A549 (cell line): ENCODE measurements at regions of chr20 and their contacts with region 1.

Region 1: DNA sequence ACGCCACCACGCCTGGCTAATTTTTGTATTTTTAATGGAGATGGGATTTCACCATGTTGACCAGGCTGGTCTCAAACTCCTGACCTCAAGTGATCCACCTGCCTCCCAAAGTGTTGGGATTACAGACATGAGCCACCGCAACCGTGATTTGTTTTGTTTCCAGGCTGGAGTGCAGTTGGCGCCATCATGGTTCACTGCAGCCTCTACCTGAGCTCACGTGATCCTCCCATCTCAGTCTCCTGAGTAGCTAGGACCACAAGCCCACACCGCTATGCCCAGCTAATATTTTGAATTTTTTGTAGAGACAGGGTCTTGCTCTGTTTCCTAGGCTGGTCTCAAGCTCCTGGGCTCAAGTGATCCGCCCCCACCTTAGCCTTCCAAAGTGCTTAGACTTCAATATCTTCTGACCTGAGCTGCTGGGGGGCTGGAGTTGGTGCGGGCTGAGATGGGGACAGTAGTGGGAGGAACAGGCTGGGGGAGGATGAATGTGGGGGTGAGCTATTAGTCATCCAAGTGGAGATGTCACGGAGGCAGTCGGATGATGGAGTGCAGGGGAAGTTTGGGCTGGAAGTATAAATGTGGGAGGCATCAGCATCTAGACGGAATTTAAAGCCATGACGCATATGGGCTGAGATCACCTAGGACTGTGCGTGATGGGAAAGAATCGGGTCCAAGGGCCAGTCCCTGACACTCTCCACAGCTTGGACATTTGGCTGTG is 23.1 kb upstream of the ZMYND8 start:
- DNase-seq: peak; percentile 56 to 92
- ATAC-seq: peak; percentile 72 to 74
- H3K4me3 ChIP-seq: no peak overlapping the region
- H3K27ac ChIP-seq: peak overlapping the region; percentile 90 to 92
- H3K4me1 ChIP-seq: peaks cover 60% of the 10 kb centered on the region
- CTCF ChIP-seq: no peak
- EP300 ChIP-seq: peak; percentile 89 to 93
- POLR2A ChIP-seq: no peak
- RAD21 ChIP-seq: peak in 1 of 2 experiments; percentile 7; a peak in 3 of 5 replicates

Region 2: DNA sequence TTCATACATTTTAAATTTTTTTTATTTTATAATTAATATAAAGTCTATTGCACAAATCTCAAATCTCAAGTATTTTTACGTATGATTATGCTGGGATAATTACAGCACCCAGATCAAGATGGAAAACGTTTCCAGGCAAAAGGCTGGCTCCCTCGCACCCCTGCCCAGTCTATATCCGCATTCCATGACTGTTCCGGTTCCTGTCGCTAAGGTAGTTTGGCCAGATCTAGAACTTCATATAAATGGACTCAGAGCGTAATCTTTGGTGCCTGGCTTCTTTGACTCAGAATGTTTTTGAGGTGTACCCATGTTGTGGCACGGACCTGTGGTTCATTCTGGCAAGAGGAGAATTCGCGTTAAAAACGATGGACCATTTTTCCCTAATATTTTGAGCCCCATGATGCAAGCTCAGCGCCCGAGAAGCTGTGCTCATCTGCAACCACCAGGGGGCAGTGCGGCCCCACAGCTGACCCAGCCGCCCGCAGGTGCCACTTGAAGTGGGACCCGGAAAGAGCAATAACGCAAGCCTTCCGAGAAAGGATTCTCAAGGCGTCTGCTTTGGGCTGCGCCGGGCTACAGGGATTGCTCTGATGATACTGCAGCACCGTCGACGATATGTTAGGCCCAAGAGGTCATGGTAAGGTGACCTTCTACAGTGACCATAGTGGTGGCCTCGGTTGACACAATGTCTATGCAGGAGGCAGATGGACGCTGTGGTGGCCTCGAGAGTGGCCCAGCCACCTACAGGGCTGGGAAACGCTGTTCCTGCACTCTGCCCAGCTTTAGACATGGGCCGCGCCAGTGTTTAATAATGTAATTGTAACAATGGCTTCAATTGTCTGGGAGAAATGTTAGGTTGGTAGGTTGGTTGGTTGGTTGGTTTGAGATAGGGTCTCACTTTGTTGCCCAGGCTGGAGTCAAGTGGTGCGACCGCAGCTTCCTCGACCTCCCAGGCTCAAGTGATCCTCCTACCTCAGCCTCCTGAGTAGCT is 183.2 kb before region 1 on chr20:
- CTCF ChIA-PET with region 1: interaction called, 267 read pairs
- POLR2A ChIA-PET with region 1: interaction called, 7 read pairs
- DNase-seq: peak; percentile 69 to 86
- ATAC-seq: peak; percentile 71 to 73
- H3K4me3 ChIP-seq: no peak overlapping the region
- H3K27ac ChIP-seq: peak overlapping the region; percentile 75 to 87
- H3K4me1 ChIP-seq: peaks cover 22% of the 10 kb centered on the region
- CTCF ChIP-seq: peak; percentile 98
- EP300 ChIP-seq: no peak
- POLR2A ChIP-seq: no peak
- RAD21 ChIP-seq: peak; percentile 96 to 98

Region 3: GRCh38 chr20:47258745-47259695 is 120.6 kb before region 1 on chr20:
- CTCF ChIA-PET with region 1: interaction called, 51 read pairs
- POLR2A ChIA-PET with region 1: no interaction called
- DNase-seq: peak in 1 of 2 experiments; percentile 23
- ATAC-seq: no peak
- H3K4me3 ChIP-seq: no peak overlapping the region
- H3K27ac ChIP-seq: no peak overlapping the region
- H3K4me1 ChIP-seq: 0 out of 3 replicates have a peak, but pooled peaks cover 4% of the 10 kb centered on the region
- CTCF ChIP-seq: no peak
- EP300 ChIP-seq: no peak
- POLR2A ChIP-seq: no peak
- RAD21 ChIP-seq: no peak

Region 4: GRCh38 chr20:47304287-47304686 is 75.3 kb before region 1 on chr20:
- CTCF ChIA-PET with region 1: interaction called, 53 read pairs
- POLR2A ChIA-PET with region 1: no interaction called
- DNase-seq: peak in 1 of 2 experiments; percentile 55
- ATAC-seq: peak; percentile 79 to 83
- H3K4me3 ChIP-seq: no peak overlapping the region
- H3K27ac ChIP-seq: peak overlapping the region; percentile 92 to 94
- H3K4me1 ChIP-seq: peaks cover 35% of the 10 kb centered on the region
- CTCF ChIP-seq: no peak
- EP300 ChIP-seq: no peak
- POLR2A ChIP-seq: no peak
- RAD21 ChIP-seq: peak; percentile 21 to 29; a peak in 3 of 5 replicates

Region 5: GRCh38 chr20:47356526-47357295 is 22.9 kb before region 1 on chr20 and contains the start of gene ZMYND8:
- CTCF ChIA-PET with region 1: interaction called, 102 read pairs
- POLR2A ChIA-PET with region 1: interaction called, 22 read pairs
- DNase-seq: peak; percentile 90 to 94
- ATAC-seq: peak; percentile 8 to 45; a peak in 3 of 6 replicates
- H3K4me3 ChIP-seq: peak within 1 kb of the TSS; percentile 7; the same call in 1 of the 3 replicates
- H3K27ac ChIP-seq: peak within 1 kb of the TSS; percentile 100
- H3K4me1 ChIP-seq: peaks cover 98% of the 10 kb centered on the region
- CTCF ChIP-seq: no peak
- EP300 ChIP-seq: no peak
- POLR2A ChIP-seq: no peak
- RAD21 ChIP-seq: no peak
- polyA plus RNA-seq, gene ZMYND8: 23.6 and 24.9 TPM in 2 replicates

Region 6: GRCh38 chr20:47453142-47453782 is 73.7 kb after region 1 on chr20:
- CTCF ChIA-PET with region 1: interaction called, 15 read pairs
- POLR2A ChIA-PET with region 1: interaction called, 3 read pairs
- DNase-seq: peak; percentile 50 to 93
- ATAC-seq: peak; percentile 85 to 90
- H3K4me3 ChIP-seq: no peak overlapping the region
- H3K27ac ChIP-seq: peak overlapping the region; percentile 87 to 90
- H3K4me1 ChIP-seq: peaks cover 68% of the 10 kb centered on the region
- CTCF ChIP-seq: no peak
- EP300 ChIP-seq: peak; percentile 78 to 82; a peak in 4 of 5 replicates
- POLR2A ChIP-seq: no peak
- RAD21 ChIP-seq: peak; percentile 38 to 39; a peak in 3 of 5 replicates

Region 7: GRCh38 chr20:47847868-47848531 is 468.4 kb after region 1 on chr20:
- CTCF ChIA-PET with region 1: no interaction called
- POLR2A ChIA-PET with region 1: no interaction called
- DNase-seq: no peak
- ATAC-seq: no peak
- H3K4me3 ChIP-seq: no peak overlapping the region
- H3K27ac ChIP-seq: no peak overlapping the region
- H3K4me1 ChIP-seq: no peaks in the 10 kb centered on the region
- CTCF ChIP-seq: no peak
- EP300 ChIP-seq: no peak
- POLR2A ChIP-seq: no peak
- RAD21 ChIP-seq: no peak

Region 8: GRCh38 chr20:48875911-48876640 is 1496.5 kb after region 1 on chr20:
- CTCF ChIA-PET with region 1: no interaction called
- POLR2A ChIA-PET with region 1: no interaction called
- DNase-seq: no peak
- ATAC-seq: peak; percentile 53 to 59; a peak in 4 of 6 replicates
- H3K4me3 ChIP-seq: no peak overlapping the region
- H3K27ac ChIP-seq: peak overlapping the region in 1 of 2 experiments; percentile 35; a peak in 2 of 6 replicates
- H3K4me1 ChIP-seq: peaks cover 24% of the 10 kb centered on the region
- CTCF ChIP-seq: no peak
- EP300 ChIP-seq: no peak
- POLR2A ChIP-seq: no peak
- RAD21 ChIP-seq: no peak